ENCODE measurements at regions of chr4 and their contacts with region 1.

Region 1: GRCh38 chr4:114208574-114209151 is 229.2 kb upstream of the ARSJ start:
- DNase-seq: no peak
- ATAC-seq: no peak
- H3K4me3 ChIP-seq: no peak overlapping the region
- H3K27ac ChIP-seq: no peak overlapping the region
- H3K4me1 ChIP-seq: no peaks in the 10 kb centered on the region
- H3K27me3 ChIP-seq: no peaks in the 10 kb centered on the region

Region 2: GRCh38 chr4:113513382-113513781 is 695.3 kb before region 1 on chr4:
- intact Hi-C with region 1: no loop called
- DNase-seq: no peak
- ATAC-seq: no peak
- H3K4me3 ChIP-seq: no peak overlapping the region
- H3K27ac ChIP-seq: no peak overlapping the region
- H3K4me1 ChIP-seq: no peaks in the 10 kb centered on the region
- H3K27me3 ChIP-seq: no peaks in the 10 kb centered on the region

Region 3: GRCh38 chr4:114378306-114378903 is 169.7 kb after region 1 on chr4:
- intact Hi-C with region 1: loop called (anchors 5 kb)
- DNase-seq: no peak
- ATAC-seq: no peak
- H3K4me3 ChIP-seq: no peak overlapping the region
- H3K27ac ChIP-seq: no peak overlapping the region
- H3K4me1 ChIP-seq: no peaks in the 10 kb centered on the region
- H3K27me3 ChIP-seq: no peaks in the 10 kb centered on the region